Activated CD4-positive, alpha-beta T cell treated with anti-CD3 and anti-CD28 coated beads, Interleukin-2, amount 10 ng/mL, durations not matched to agents 7 days and 5 days (primary cell): ENCODE measurements at regions of chr9 and their contacts with region 1.

Region 1: DNA sequence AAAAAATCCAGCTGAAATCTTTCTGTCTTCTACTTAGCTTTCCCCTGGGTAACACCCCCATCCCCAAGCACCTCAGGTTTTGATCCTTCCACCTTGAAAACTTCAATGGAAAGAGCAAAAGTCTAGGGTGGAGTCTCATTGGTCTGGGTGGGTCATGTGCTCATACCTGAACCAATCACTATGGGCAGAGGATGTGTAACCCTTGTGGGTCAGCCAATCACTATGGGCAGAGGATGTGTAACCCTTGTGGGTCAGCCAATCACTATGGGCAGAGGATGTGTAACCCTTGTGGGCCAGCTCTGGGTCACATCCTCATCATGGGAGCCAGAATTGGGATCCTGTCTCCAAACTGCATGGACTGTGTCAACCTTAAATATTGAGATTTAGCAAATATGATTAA is 18.5 kb downstream of the NAIF1 start:
- DNase-seq: no peak
- H3K4me3 Mint-ChIP-seq: no peak overlapping the region
- H3K27ac Mint-ChIP-seq: no peak overlapping the region
- H3K4me1 Mint-ChIP-seq: peaks cover 3% of the 10 kb centered on the region
- H3K27me3 Mint-ChIP-seq: peaks cover 1% of the 10 kb centered on the region

Region 2: DNA sequence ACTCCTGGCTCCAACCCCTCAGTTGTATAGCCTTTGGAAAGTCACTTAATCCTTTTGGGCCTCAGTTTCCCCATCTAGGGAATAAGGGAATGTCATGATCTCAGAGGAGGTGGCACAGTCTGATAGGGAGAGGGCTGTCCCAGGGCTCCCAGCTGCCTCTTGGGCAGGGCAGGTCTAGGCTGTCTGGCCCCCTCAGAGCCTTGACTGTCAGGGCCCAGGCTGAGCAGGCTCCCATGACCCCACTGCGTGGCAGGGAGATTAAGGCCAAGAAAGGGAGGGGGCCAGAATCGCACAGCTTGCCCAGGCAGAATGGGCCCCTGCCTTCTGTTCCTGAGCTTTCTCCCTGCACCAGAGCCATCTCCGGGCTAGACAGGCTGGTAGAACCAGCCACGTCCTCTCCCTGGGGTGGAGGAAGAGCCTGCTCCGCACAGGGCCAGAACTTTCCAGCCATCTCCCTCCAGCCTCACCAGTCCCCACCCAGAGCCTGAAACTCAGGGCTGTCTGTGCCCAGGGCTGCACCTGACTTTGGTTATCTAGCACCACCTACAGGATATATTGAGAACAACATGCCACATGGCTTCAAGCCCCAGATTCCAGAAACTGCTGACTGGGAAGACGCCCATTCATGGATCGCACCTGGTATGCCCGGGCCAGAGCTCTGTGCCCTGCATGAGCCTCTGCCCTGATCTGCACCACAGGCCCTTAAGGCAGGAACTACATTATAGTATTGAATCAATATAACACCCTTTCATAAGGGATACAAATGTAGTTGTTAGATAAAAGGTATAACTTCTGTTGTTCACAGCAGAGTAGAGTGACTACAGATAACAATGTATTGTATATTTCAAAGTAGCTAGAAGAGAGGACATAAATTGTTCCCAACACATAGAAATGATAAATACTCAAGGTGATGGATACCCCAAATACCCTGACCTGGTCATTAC is 13.6 kb before region 1 on chr9:
- CTCF ChIA-PET with region 1: interaction called, 26 read pairs
- POLR2A ChIA-PET with region 1: no interaction called
- DNase-seq: peak; percentile 81
- H3K4me3 Mint-ChIP-seq: no peak overlapping the region
- H3K27ac Mint-ChIP-seq: peak overlapping the region; percentile 36
- H3K4me1 Mint-ChIP-seq: peaks cover 42% of the 10 kb centered on the region
- H3K27me3 Mint-ChIP-seq: no peaks in the 10 kb centered on the region

Region 3: DNA sequence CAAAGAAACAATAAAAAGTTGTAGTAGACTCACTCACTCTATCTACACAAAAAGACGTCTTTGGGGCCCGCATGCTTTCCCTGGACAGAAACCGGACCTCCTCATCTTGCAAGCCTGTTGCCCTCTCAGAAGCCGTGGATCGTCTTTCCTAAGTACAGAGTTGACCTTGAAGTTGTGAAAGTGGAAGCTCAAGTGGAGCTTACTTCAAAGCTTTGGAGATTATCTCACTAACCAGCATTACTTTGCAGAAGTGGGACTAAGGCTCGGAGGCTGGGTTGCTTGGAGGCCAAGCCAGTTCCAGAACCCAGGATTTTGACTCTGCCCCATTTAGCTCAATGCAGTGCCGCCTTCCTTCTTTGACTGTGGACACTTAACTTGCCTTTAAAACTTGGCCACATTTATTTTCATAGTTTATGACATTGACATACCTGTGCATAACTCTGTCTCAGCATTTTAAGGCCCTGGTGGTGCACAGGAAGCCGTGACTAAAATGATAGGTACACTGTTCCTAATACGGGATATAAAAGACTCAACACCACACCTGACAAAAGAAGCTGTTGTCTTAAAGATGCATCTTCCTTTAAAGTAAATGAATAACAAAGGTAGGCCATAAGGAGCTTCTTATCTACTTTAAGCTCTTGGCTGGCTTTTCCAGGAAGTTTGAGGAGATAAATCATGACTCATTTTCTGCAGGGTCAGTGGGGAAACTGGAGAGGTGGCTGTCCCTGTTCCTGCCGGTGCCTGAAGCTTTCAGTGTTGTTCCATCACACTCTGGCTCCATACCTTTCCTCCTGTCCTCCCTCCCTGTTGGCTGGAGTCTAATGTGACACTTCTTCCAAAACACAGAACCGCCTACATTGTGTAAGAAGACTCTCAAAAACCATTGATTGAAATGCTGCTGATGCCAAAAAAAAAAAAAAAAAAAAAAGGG is 30.1 kb after region 1 on chr9:
- CTCF ChIA-PET with region 1: no interaction called
- POLR2A ChIA-PET with region 1: no interaction called
- DNase-seq: no peak
- H3K4me3 Mint-ChIP-seq: no peak overlapping the region
- H3K27ac Mint-ChIP-seq: peak overlapping the region; percentile 22
- H3K4me1 Mint-ChIP-seq: peaks cover 49% of the 10 kb centered on the region
- H3K27me3 Mint-ChIP-seq: no peaks in the 10 kb centered on the region